ENCODE measurements at regions of chr21 and their contacts with region 1.

Region 1: DNA sequence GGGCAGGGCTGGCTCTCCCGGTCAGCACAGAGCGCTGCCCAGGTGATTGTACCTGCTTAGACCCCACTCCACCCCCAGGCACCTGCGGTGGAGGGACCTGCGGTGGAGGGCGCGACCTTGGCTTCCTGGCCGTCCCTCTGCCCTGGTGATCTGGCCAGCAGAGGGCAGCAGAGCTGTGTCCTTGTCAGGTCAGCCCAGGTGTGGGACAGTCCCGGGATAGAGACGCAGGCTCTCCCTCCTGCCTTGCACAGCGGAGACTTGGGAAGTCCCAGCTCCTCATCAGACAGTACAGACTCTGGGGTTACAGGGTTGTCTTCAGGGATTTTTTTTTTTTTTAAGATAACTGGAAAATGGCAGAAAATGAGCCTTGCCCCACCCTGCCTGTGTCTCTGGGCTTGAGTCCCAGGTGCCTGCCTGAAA is 10.0 kb downstream of the SLX9 start:
- DNase-seq: peak; percentile 92
- ATAC-seq: peak; percentile 89
- H3K4me3 ChIP-seq: no peak overlapping the region
- H3K27ac ChIP-seq: no peak overlapping the region
- H3K4me1 ChIP-seq: peaks cover 7% of the 10 kb centered on the region
- H3K27me3 ChIP-seq: no peaks in the 10 kb centered on the region
- CTCF ChIP-seq: peak; percentile 93

Region 2: GRCh38 chr21:44737706-44738354 is 212.0 kb before region 1 on chr21:
- intact Hi-C with region 1: no loop called
- DNase-seq: no peak
- ATAC-seq: no peak
- H3K4me3 ChIP-seq: no peak overlapping the region
- H3K27ac ChIP-seq: no peak overlapping the region
- H3K4me1 ChIP-seq: no peaks in the 10 kb centered on the region
- H3K27me3 ChIP-seq: no peaks in the 10 kb centered on the region
- CTCF ChIP-seq: no peak

Region 3: GRCh38 chr21:45130324-45130774 is 180.6 kb after region 1 on chr21:
- intact Hi-C with region 1: loop called (anchors 5 kb)
- DNase-seq: no peak
- ATAC-seq: no peak
- H3K4me3 ChIP-seq: peak overlapping the region; percentile 12
- H3K27ac ChIP-seq: peak overlapping the region; percentile 51
- H3K4me1 ChIP-seq: peaks cover 49% of the 10 kb centered on the region
- H3K27me3 ChIP-seq: no peaks in the 10 kb centered on the region
- CTCF ChIP-seq: no peak

Measured in upper lobe of right lung (tissue), 1 donor.